HCT116 (cell line): ENCODE measurements at regions of chr2 and their contacts with region 1.

Region 1: DNA sequence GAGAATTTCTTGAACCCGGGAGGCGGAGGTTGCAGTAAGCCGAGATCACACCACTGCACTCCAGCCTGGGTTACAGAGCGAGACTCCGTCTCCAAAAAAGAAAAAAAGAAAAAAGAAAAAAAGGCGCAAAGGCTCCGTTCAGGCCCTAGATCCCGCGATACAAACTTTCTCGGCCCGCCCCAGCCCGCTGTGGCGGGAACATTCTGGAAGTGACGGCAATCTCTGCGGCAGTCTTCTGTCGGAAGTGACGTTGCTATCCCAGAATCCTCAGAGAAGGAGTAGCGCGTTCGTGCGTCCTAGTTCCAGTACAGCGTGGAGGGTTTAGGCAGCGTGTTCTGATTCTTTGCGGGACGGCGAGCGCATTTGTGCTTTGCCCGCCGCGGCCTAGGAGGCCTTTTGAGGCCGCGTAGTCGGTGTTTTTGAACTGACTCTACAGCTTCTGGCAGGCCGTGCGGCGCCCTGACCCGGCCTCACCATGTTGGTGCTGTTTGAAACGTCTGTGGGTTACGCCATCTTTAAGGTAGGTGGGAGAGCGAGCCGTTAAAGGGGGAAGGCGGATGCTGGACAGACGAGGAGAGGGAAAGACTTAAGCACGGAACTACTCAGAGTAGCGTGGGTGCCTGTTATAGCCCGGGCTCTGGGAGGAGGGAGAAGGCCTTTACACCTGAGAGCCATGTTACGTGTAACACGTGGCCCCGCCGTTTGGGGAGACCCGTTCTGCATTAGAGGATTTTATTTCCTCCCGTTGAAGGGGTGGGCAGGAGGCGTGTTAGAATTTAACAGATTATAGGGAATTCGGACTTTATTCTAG is at the start of gene NOP58:
- DNase-seq: peak; percentile 92
- ATAC-seq: peak; percentile 91
- H3K4me3 ChIP-seq: peak within 1 kb of the TSS; percentile 80 to 100
- H3K27ac ChIP-seq: peak within 1 kb of the TSS; percentile 89
- H3K4me1 ChIP-seq: peaks cover 14 to 30% of the 10 kb centered on the region in 2 experiments
- H3K27me3 ChIP-seq: no peaks in the 10 kb centered on the region
- CTCF ChIP-seq: no peak
- POLR2A ChIP-seq: peak; percentile 94
- RAD21 ChIP-seq: no peak
- total RNA-seq, gene NOP58: 136 TPM

Region 2: DNA sequence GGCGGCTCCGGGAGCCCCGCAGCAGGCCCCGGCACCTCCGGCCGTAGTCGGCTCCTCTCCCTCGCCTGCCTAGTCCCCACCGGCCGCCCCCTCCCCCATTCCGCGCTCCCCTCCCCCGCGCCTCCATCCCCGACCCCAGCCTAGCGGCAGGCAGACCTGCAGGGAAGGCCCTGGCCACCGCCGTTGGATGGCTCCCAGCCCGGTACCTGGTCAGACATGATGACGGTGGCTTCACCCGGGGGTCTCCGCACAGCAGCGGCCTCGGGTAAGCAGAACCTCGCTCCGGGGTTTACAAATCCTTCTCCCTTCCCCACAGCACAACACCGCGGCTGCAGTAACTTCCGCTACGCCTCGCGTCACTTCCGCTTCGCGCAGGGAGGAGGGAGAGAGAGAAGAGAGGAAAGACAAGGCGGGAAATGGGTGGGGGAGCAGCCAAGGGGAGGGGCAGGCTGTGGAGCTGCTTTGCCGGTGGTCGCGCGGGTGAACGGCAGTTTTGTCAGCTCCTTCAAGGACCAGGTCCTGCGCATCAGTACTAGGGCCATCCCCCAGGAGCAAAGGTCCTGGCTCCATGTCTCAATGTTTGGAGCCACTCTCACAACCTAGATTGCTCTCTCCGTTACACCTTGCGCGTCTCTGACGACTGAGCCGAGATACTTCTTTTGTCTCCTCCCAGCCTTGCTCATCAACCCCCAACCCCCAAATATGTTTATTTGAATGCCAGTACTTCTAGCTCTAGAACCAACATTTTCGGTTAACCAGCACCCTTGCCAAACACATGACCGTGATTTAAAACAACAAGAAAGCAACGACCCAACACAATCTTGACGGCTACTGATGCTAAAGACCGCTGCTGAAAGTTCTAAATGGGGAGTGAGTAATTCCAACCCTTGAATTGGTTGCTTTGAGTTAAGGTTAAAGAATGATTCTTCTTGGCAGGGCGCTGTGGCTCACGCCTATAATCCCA is 27.2 kb before region 1 on chr2 and contains the start of gene SUMO1:
- CTCF ChIA-PET with region 1: no interaction called
- POLR2A ChIA-PET with region 1: no interaction called
- RAD21 ChIA-PET with region 1: no interaction called
- intact Hi-C with region 1: loop called (anchors 1 kb)
- DNase-seq: peak; percentile 69
- ATAC-seq: peak; percentile 92
- H3K4me3 ChIP-seq: peak within 1 kb of the TSS; percentile 81 to 99
- H3K27ac ChIP-seq: peak within 1 kb of the TSS; percentile 62
- H3K4me1 ChIP-seq: peaks cover 3 to 17% of the 10 kb centered on the region in 2 experiments; a peak in 3 of 4 replicates
- H3K27me3 ChIP-seq: no peaks in the 10 kb centered on the region
- CTCF ChIP-seq: no peak
- POLR2A ChIP-seq: peak; percentile 71
- RAD21 ChIP-seq: no peak
- total RNA-seq, gene SUMO1: 130 TPM

Region 3: DNA sequence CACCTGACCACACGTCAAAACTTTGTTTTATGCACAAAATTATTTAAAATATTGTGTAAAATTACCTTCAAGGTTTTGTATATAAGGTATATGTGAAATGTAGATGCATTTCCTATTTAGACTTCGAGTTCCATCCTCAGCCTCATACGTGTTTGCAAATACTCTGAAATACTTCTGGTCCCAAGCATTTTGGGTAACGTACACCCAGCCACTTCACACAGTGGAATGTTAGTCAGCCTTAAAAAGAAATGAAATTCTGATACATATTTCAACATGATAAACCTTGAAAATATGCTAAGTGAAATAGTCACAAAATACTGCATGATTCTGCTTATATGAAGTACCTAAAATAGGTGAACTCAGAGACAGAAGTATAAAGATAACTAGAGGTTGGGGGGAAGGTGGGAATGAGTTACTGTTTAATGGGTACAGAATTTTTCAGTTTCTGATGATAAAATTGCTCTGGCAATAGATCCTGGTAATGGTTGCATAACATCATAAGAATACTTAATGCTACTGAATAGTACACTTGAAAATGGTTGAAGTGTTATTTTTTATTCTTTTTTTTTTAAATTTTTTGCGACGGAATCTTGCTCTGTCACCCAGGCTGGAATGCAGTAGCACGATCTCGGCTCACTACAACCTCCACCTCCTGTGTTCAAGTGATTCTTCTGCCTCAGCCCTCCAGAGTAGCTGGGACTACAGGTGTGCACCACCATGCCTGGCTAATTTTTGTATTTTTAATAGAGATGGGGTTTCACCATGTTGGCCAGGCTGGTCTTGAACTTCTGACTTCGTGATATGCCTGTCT is 23.9 kb after region 1 on chr2:
- CTCF ChIA-PET with region 1: no interaction called
- POLR2A ChIA-PET with region 1: no interaction called
- RAD21 ChIA-PET with region 1: no interaction called
- intact Hi-C with region 1: no loop called
- DNase-seq: no peak
- ATAC-seq: no peak
- H3K4me3 ChIP-seq: no peak overlapping the region
- H3K27ac ChIP-seq: no peak overlapping the region
- H3K4me1 ChIP-seq: no peaks in the 10 kb centered on the region
- H3K27me3 ChIP-seq: no peaks in the 10 kb centered on the region
- CTCF ChIP-seq: no peak
- POLR2A ChIP-seq: no peak
- RAD21 ChIP-seq: no peak

Region 4: GRCh38 chr2:202299712-202300111 is 34.0 kb after region 1 on chr2:
- CTCF ChIA-PET with region 1: no interaction called
- POLR2A ChIA-PET with region 1: no interaction called
- RAD21 ChIA-PET with region 1: no interaction called
- intact Hi-C with region 1: no loop called
- DNase-seq: no peak
- ATAC-seq: no peak
- H3K4me3 ChIP-seq: no peak overlapping the region
- H3K27ac ChIP-seq: no peak overlapping the region
- H3K4me1 ChIP-seq: no peaks in the 10 kb centered on the region
- H3K27me3 ChIP-seq: no peaks in the 10 kb centered on the region
- CTCF ChIP-seq: no peak
- POLR2A ChIP-seq: no peak
- RAD21 ChIP-seq: no peak

Region 5: GRCh38 chr2:202703091-202703490 is 437.4 kb after region 1 on chr2:
- CTCF ChIA-PET with region 1: no interaction called
- POLR2A ChIA-PET with region 1: no interaction called
- RAD21 ChIA-PET with region 1: no interaction called
- intact Hi-C with region 1: no loop called
- DNase-seq: no peak
- ATAC-seq: no peak
- H3K4me3 ChIP-seq: no peak overlapping the region
- H3K27ac ChIP-seq: no peak overlapping the region
- H3K4me1 ChIP-seq: no peaks in the 10 kb centered on the region
- H3K27me3 ChIP-seq: no peaks in the 10 kb centered on the region
- CTCF ChIP-seq: no peak
- POLR2A ChIP-seq: no peak
- RAD21 ChIP-seq: no peak